ENCODE measurements at regions of chr1 and their contacts with region 1.

Region 1: DNA sequence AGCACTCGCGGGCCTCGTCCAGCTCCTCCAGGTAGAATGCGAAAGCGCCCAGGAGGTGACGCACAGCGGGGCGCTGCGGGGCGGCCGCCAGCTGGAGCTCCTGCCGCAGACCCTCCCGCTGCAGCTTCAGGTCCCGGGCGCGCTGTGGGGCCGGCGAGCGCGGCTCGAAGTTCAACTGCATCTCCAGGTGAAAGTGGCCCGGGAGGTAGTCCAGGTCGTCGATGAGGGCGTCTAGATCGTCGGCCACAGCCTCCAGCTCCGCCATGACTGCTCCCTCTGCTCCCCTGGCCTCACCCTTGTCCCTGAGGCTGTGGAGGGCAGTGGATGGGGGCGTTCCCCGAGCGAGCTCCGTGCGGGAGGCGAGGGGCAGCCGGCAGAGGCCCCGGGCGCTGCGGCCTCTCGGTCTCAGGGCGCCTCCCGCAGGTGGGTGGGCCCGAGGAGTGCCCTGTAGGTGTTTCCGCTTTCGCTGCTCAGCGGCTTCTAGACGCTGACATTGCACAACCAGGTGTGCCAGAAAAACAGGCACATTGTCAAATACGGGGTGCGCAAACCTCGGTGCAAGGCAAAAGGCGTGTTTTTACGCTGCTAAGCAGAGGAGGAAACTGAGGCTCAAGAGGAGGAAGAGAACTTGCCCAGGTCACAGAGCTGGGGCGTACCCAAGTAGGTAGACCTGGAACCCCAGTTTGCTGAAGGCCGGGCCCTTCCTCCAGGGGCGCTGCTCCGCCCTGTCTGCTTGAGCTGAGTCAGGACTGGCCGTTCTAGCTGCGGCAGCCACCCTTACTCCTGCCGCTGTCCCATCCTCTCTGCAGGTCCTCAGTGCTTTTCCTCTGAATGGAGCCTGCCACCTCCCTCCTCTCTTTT is at the start of gene TTC22:
- DNase-seq: peak; percentile 85
- ATAC-seq: peak; percentile 93
- H3K4me3 Mint-ChIP-seq: peak within 1 kb of the TSS; percentile 88
- H3K27ac Mint-ChIP-seq: peak within 1 kb of the TSS; percentile 89
- H3K4me1 Mint-ChIP-seq: peaks cover 53% of the 10 kb centered on the region
- H3K27me3 Mint-ChIP-seq: no peaks in the 10 kb centered on the region
- total RNA-seq, gene TTC22: 5.0 to 6.5 TPM

Region 2: DNA sequence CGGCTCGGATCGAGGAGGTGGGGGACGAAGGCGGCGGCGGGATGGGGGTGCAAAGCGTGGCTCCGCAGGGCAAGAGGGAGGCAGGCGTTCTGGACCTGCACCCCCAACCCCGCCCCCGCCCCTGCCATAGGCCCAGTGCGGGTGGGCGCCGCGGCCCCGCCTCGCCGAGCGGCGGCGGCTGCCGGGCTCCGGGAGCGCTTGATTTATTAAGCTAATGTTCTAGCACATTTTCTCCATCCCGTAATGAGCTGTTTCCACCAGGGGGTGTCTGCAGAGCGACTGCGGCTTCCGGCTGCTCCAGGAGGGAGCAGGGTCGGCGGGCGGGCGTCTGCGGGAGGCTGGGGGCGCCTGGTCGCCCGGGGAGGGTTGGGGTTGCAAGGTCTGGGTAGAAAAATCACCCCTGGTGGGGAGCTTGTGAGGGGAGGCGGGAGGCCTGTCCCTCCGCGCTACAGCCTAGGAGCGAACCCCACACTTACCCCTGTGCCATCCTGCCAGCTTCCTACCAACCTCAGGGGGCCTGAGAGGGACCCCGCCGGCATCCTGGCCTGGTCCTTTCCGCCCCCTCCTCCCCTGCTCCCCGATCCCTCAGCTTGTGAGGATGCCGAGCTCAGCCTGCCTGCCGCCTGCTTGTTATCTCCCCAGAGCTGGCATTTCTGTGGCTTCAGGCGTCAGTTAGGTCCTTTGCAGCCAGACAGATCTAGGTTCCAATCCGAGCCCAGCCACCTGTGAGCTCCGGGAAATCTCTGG is 301.6 kb before region 1 on chr1:
- CTCF ChIA-PET with region 1: interaction called, 11 read pairs
- POLR2A ChIA-PET with region 1: no interaction called
- DNase-seq: peak; percentile 65
- ATAC-seq: peak; percentile 82
- H3K4me3 Mint-ChIP-seq: peak overlapping the region; percentile 64
- H3K27ac Mint-ChIP-seq: no peak overlapping the region
- H3K4me1 Mint-ChIP-seq: peaks cover 19% of the 10 kb centered on the region
- H3K27me3 Mint-ChIP-seq: peaks cover 40% of the 10 kb centered on the region

Region 3: GRCh38 chr1:54671985-54672608 is 129.0 kb before region 1 on chr1:
- CTCF ChIA-PET with region 1: interaction called, 12 read pairs
- POLR2A ChIA-PET with region 1: interaction called, 3 read pairs
- DNase-seq: peak; percentile 87
- ATAC-seq: peak; percentile 92
- H3K4me3 Mint-ChIP-seq: no peak overlapping the region
- H3K27ac Mint-ChIP-seq: peak overlapping the region; percentile 10
- H3K4me1 Mint-ChIP-seq: peaks cover 10% of the 10 kb centered on the region
- H3K27me3 Mint-ChIP-seq: peaks cover 28% of the 10 kb centered on the region

Region 4: GRCh38 chr1:54715493-54716298 is 85.4 kb before region 1 on chr1 and contains the start of gene TTC4:
- CTCF ChIA-PET with region 1: interaction called, 29 read pairs
- POLR2A ChIA-PET with region 1: interaction called, 6 read pairs
- DNase-seq: peak; percentile 85
- ATAC-seq: peak; percentile 99
- H3K4me3 Mint-ChIP-seq: peak within 1 kb of the TSS; percentile 88
- H3K27ac Mint-ChIP-seq: peak within 1 kb of the TSS; percentile 74
- H3K4me1 Mint-ChIP-seq: peaks cover 26% of the 10 kb centered on the region
- H3K27me3 Mint-ChIP-seq: no peaks in the 10 kb centered on the region
- total RNA-seq, gene TTC4: 18.8 to 21.6 TPM

Region 5: GRCh38 chr1:54764133-54764921 is 36.8 kb before region 1 on chr1 and contains the start of gene PARS2:
- CTCF ChIA-PET with region 1: interaction called, 31 read pairs
- POLR2A ChIA-PET with region 1: interaction called, 3 read pairs
- DNase-seq: peak; percentile 97
- ATAC-seq: peak; percentile 96
- H3K4me3 Mint-ChIP-seq: peak within 1 kb of the TSS; percentile 94
- H3K27ac Mint-ChIP-seq: peak within 1 kb of the TSS; percentile 93
- H3K4me1 Mint-ChIP-seq: peaks cover 18% of the 10 kb centered on the region
- H3K27me3 Mint-ChIP-seq: no peaks in the 10 kb centered on the region
- total RNA-seq, gene PARS2: 4.2 TPM

Region 6: DNA sequence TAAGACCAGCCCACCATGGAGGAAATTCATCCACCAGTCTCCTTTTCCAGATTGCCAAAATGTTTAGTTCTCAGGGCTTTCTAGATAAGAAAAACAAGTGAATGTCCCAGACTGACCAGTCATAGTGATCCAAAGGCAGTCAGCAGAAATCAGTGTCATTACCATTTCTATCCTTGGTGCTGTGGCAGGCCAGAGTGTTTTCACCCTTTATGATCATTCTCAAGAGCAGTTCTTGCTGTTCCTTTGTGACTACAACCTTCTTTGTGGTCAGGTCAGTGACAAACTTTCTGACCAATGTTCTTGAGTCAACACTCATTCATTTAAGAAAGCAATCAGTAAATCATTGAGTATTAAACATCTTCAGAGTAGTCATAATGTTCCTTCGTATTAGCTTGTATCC is 93.1 kb after region 1 on chr1:
- CTCF ChIA-PET with region 1: no interaction called
- POLR2A ChIA-PET with region 1: no interaction called
- DNase-seq: no peak
- ATAC-seq: no peak
- H3K4me3 Mint-ChIP-seq: no peak overlapping the region
- H3K27ac Mint-ChIP-seq: no peak overlapping the region
- H3K4me1 Mint-ChIP-seq: no peaks in the 10 kb centered on the region
- H3K27me3 Mint-ChIP-seq: peaks cover 21% of the 10 kb centered on the region